ENCODE measurements at regions of chr2 and their contacts with region 1.

Region 1: DNA sequence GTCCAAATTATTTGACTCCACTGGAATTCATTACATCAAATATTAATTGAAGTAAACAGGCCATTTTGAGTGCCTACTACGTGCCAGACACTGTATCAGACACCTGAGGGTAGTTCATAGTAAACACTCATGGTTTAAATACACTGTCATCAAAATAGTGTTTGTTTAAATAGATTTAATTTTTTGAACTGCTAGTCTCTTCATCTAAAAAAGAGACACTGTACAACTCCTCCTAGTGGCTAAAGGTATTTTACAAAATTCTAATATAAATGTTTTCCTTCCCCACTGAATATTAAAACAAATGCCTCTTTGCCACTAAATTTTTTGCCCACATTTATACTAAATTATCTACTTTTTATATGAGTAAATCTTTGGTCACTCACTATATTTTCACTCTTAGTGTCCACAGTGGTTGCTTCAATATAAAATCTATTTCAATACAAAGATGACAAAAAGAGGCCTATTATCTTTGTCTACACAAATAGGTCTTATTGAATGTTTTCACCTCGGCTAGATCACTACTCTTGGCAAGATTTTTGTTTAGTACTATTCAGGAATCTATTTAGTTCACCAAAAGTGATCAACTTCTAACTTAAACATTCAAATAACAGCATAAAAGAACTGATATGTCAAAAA is 122.1 kb downstream of the TMEM247 start:
- DNase-seq: peak in 1 of 4 donors; percentile 12
- ATAC-seq: no peak
- H3K4me3 ChIP-seq: no peak overlapping the region
- H3K27ac ChIP-seq: no peak overlapping the region
- H3K4me1 ChIP-seq: no peaks in the 10 kb centered on the region
- H3K27me3 ChIP-seq: no peaks in the 10 kb centered on the region
- CTCF ChIP-seq: peak in 1 of 2 donors; percentile 32

Region 2: DNA sequence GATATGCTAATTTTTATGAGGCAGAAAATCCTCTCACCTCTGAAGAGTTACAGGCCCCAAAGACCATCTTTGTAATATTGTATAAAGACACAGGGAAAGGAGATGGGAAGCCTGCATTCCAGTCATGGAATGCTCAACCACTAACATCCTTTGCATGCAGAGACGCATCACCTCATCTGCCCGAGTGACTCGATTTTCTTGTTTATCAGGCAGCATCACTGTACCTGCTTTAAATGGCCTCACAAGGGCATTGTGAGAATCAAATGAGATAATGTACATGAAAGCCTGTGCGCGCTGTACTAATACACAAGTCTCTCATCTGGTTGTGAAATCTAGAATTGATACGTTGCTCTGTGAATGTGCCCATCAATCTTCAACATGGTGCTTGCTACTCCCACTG is 132.3 kb before region 1 on chr2:
- intact Hi-C with region 1: loop called in 1 of 2 experiments (anchors 5 kb)
- DNase-seq: no peak
- ATAC-seq: no peak
- H3K4me3 ChIP-seq: no peak overlapping the region
- H3K27ac ChIP-seq: no peak overlapping the region
- H3K4me1 ChIP-seq: peaks cover 0 to 20% of the 10 kb centered on the region in 2 donors
- H3K27me3 ChIP-seq: no peaks in the 10 kb centered on the region
- CTCF ChIP-seq: no peak

Region 3: DNA sequence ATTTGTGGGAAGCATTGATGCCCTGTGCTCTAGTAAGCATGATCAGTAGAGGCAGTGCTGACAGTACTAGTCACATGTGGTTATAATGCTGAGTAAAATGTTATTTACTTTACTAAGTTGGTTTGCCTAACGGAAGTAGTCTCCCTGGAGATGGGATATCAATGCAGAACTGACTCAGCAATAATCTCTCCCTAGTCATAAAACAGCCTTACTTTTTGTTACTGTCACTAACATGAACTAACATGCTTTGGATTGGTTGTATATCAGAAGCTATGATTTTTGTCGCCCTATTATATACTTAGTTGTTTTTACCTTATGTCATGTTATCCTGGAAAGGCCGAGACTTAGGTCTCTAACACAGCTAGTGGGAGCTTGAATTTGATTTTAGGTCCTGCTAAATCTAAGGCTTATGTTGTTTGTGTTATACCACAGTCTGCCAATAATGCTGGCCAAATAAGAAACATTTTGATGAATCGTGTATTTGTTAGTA is 147.6 kb after region 1 on chr2:
- intact Hi-C with region 1: no loop called
- DNase-seq: peak in 2 of 4 donors; percentile 19 to 28
- ATAC-seq: peak; percentile 74
- H3K4me3 ChIP-seq: no peak overlapping the region
- H3K27ac ChIP-seq: peak overlapping the region in 1 of 2 donors; percentile 22
- H3K4me1 ChIP-seq: peaks cover 9 to 30% of the 10 kb centered on the region in 2 donors
- H3K27me3 ChIP-seq: no peaks in the 10 kb centered on the region
- CTCF ChIP-seq: no peak